Activated B cell treated with CpG ODN at 0.5 μM for 24 hours (primary cell): ENCODE measurements at regions of chr11 and their contacts with region 1.

Region 1: GRCh38 chr11:32176223-32176934 is 85.5 kb downstream of the RCN1 start:
- DNase-seq: peak; percentile 39
- ATAC-seq: peak; percentile 75
- H3K4me3 Mint-ChIP-seq: no peak overlapping the region
- H3K27ac Mint-ChIP-seq: no peak overlapping the region
- H3K4me1 Mint-ChIP-seq: no peaks in the 10 kb centered on the region
- H3K27me3 Mint-ChIP-seq: peaks cover 5% of the 10 kb centered on the region
- CTCF ChIP-seq: no peak

Region 2: GRCh38 chr11:31107062-31107461 is 1069.3 kb before region 1 on chr11:
- CTCF ChIA-PET with region 1: interaction called, 16 read pairs
- POLR2A ChIA-PET with region 1: no interaction called
- intact Hi-C with region 1: loop called (anchors 1 kb)
- DNase-seq: peak; percentile 14
- ATAC-seq: no peak
- H3K4me3 Mint-ChIP-seq: no peak overlapping the region
- H3K27ac Mint-ChIP-seq: no peak overlapping the region
- H3K4me1 Mint-ChIP-seq: no peaks in the 10 kb centered on the region
- H3K27me3 Mint-ChIP-seq: no peaks in the 10 kb centered on the region
- CTCF ChIP-seq: no peak

Region 3: GRCh38 chr11:31340903-31341572 is 835.3 kb before region 1 on chr11:
- CTCF ChIA-PET with region 1: no interaction called
- POLR2A ChIA-PET with region 1: no interaction called
- intact Hi-C with region 1: loop called (anchors 1 kb)
- DNase-seq: no peak
- ATAC-seq: no peak
- H3K4me3 Mint-ChIP-seq: no peak overlapping the region
- H3K27ac Mint-ChIP-seq: no peak overlapping the region
- H3K4me1 Mint-ChIP-seq: no peaks in the 10 kb centered on the region
- H3K27me3 Mint-ChIP-seq: peaks cover 14% of the 10 kb centered on the region
- CTCF ChIP-seq: no peak

Region 4: GRCh38 chr11:31487848-31488247 is 688.5 kb before region 1 on chr11:
- CTCF ChIA-PET with region 1: interaction called, 3 read pairs
- POLR2A ChIA-PET with region 1: no interaction called
- intact Hi-C with region 1: loop called (anchors 1 kb)
- DNase-seq: no peak
- ATAC-seq: no peak
- H3K4me3 Mint-ChIP-seq: no peak overlapping the region
- H3K27ac Mint-ChIP-seq: no peak overlapping the region
- H3K4me1 Mint-ChIP-seq: peaks cover 5% of the 10 kb centered on the region
- H3K27me3 Mint-ChIP-seq: no peaks in the 10 kb centered on the region
- CTCF ChIP-seq: no peak

Region 5: DNA sequence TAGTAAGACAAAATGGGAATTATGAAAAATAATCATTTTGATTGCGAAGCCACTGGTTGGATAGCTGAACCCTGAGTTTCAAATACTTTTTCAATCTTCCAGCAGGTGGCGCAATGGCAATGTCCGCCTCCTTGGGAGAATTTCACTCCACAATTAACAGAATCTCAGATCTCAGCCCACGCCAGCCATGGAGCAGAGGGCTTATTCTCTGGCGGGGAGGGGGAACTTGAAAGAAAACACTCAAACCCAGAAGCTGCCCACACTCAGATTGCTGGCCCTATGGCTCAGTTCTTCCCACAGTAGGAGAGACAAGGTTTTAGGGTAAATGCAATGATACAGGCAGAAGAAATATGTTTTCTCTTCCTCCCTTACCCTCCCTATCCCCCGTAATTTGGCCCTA is 124.2 kb before region 1 on chr11:
- CTCF ChIA-PET with region 1: interaction called, 170 read pairs
- POLR2A ChIA-PET with region 1: no interaction called
- intact Hi-C with region 1: loop called (anchors 1 kb)
- DNase-seq: no peak
- ATAC-seq: no peak
- H3K4me3 Mint-ChIP-seq: no peak overlapping the region
- H3K27ac Mint-ChIP-seq: no peak overlapping the region
- H3K4me1 Mint-ChIP-seq: no peaks in the 10 kb centered on the region
- H3K27me3 Mint-ChIP-seq: peaks cover 16% of the 10 kb centered on the region
- CTCF ChIP-seq: peak; percentile 20